CD4-positive, alpha-beta memory T cell (primary cell): ENCODE measurements at regions of chr5 and their contacts with region 1.

Region 1: GRCh38 chr5:79133657-79134451 is 22.2 kb downstream of the BHMT start:
- DNase-seq: peak; percentile 43 to 58 (median 50)
- H3K4me3 ChIP-seq: peak overlapping the region in 1 of 2 donors; percentile 26
- H3K4me3 Mint-ChIP-seq: peak overlapping the region in 7 of 8 donors; percentile 29 to 83 (median 70)
- H3K27ac ChIP-seq: no peak overlapping the region
- H3K27ac Mint-ChIP-seq: peak overlapping the region in 2 of 7 donors; percentile 45 to 69
- H3K4me1 ChIP-seq: peaks cover 13% of the 10 kb centered on the region
- H3K4me1 Mint-ChIP-seq: peaks cover 7 to 11% (median 10%) of the 10 kb centered on the region in 4 donors
- H3K27me3 ChIP-seq: no peaks in the 10 kb centered on the region
- H3K27me3 Mint-ChIP-seq: peaks cover 4 to 7% of the 10 kb centered on the region in 2 donors

Region 2: DNA sequence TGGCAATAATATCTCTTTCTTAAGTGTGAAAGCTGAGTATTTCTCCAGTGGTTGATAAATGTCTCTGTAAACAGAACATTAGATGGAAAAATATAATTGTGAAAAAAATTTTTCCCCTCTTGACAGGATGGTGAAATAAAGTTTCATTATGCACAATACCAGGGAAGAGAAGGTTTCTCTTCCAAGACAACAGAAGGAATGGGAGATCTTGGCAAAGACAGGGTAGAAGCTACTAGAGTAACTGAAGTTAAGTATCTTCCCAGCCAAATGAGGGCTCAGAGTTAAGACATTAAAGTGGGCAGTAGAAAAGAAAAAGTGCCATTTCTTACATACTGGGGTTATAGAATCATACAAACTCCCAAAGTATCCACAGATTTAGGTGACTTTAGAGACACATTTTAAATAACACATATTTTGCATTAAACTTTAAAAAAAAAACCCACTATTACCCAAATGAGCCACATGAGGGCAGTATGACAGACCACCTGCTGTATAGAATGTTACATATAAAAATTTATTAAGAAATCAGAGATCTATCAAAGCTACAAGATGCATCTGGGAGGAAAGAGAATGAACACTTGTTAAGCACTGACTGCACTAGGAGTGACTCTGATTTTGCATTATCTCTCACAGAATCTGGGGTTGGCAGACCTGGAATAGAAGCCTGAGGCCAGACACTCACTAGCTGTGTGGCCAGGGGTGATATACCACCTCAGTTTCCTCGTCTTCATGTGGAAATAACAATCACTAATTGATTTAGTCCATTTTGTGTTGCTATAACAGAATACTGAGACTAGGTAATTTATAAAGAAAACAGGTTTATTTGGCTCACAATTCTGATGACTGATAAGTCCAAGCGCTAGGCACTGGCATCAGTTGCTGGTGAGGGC is 247.3 kb before region 1 on chr5:
- CTCF ChIA-PET with region 1: interaction called, 6 read pairs
- POLR2A ChIA-PET with region 1: no interaction called
- intact Hi-C with region 1: loop called (anchors 1 kb)
- DNase-seq: peak in 3 of 5 donors; percentile 2 to 14 (median 11)
- H3K4me3 ChIP-seq: no peak overlapping the region
- H3K4me3 Mint-ChIP-seq: no peak overlapping the region
- H3K27ac ChIP-seq: no peak overlapping the region
- H3K27ac Mint-ChIP-seq: peak overlapping the region in 1 of 7 donors; percentile 13
- H3K4me1 ChIP-seq: peaks cover 8% of the 10 kb centered on the region
- H3K4me1 Mint-ChIP-seq: peaks cover 7 to 17% (median 13%) of the 10 kb centered on the region in 4 donors
- H3K27me3 ChIP-seq: no peaks in the 10 kb centered on the region
- H3K27me3 Mint-ChIP-seq: no peaks in the 10 kb centered on the region

Region 3: GRCh38 chr5:79020861-79021561 is 112.8 kb before region 1 on chr5:
- CTCF ChIA-PET with region 1: interaction called, 64 read pairs
- POLR2A ChIA-PET with region 1: no interaction called
- intact Hi-C with region 1: loop called (anchors 1 kb)
- DNase-seq: peak in 3 of 5 donors; percentile 14 to 21 (median 18)
- H3K4me3 ChIP-seq: no peak overlapping the region
- H3K4me3 Mint-ChIP-seq: peak overlapping the region in 3 of 8 donors; percentile 11 to 33 (median 20)
- H3K27ac ChIP-seq: no peak overlapping the region
- H3K27ac Mint-ChIP-seq: no peak overlapping the region
- H3K4me1 ChIP-seq: no peaks in the 10 kb centered on the region
- H3K4me1 Mint-ChIP-seq: peaks cover 0 to 11% (median 4%) of the 10 kb centered on the region in 4 donors
- H3K27me3 ChIP-seq: peaks cover 12% of the 10 kb centered on the region
- H3K27me3 Mint-ChIP-seq: peaks cover 22 to 53% of the 10 kb centered on the region in 2 donors

Region 4: GRCh38 chr5:79151942-79152671 is 18.3 kb after region 1 on chr5:
- CTCF ChIA-PET with region 1: interaction called, 71 read pairs
- POLR2A ChIA-PET with region 1: no interaction called
- intact Hi-C with region 1: no loop called
- DNase-seq: no peak
- H3K4me3 ChIP-seq: no peak overlapping the region
- H3K4me3 Mint-ChIP-seq: no peak overlapping the region
- H3K27ac ChIP-seq: no peak overlapping the region
- H3K27ac Mint-ChIP-seq: no peak overlapping the region
- H3K4me1 ChIP-seq: no peaks in the 10 kb centered on the region
- H3K4me1 Mint-ChIP-seq: no peaks in the 10 kb centered on the region
- H3K27me3 ChIP-seq: no peaks in the 10 kb centered on the region
- H3K27me3 Mint-ChIP-seq: peaks cover 2 to 6% of the 10 kb centered on the region in 2 donors

Region 5: GRCh38 chr5:79200573-79201183 is 66.8 kb after region 1 on chr5:
- CTCF ChIA-PET with region 1: interaction called, 21 read pairs
- POLR2A ChIA-PET with region 1: interaction called, 3 read pairs
- intact Hi-C with region 1: loop called (anchors 2 kb)
- DNase-seq: peak in 4 of 5 donors; percentile 4 to 12 (median 7)
- H3K4me3 ChIP-seq: no peak overlapping the region
- H3K4me3 Mint-ChIP-seq: no peak overlapping the region
- H3K27ac ChIP-seq: no peak overlapping the region
- H3K27ac Mint-ChIP-seq: no peak overlapping the region
- H3K4me1 ChIP-seq: no peaks in the 10 kb centered on the region
- H3K4me1 Mint-ChIP-seq: no peaks in the 10 kb centered on the region
- H3K27me3 ChIP-seq: no peaks in the 10 kb centered on the region
- H3K27me3 Mint-ChIP-seq: no peaks in the 10 kb centered on the region

Region 6: DNA sequence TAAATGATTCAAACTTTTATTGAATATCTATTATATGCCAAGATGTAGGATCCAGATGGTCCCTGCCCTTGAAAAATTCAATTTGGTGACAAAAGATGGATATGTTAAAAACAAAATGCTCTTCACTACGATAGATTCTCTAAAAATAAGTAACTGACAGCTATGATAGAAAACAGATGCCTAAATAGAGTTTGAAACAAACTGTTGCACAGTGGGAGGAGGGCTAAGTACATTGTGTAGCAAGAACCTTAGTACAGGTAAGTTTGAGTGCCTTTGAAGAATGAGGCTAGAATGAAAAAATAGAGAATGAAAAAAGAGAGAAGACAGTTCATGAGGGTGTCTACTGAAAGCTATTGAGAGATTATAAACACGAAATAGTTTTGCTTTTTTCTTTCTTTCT is 325.8 kb after region 1 on chr5:
- CTCF ChIA-PET with region 1: interaction called, 67 read pairs
- POLR2A ChIA-PET with region 1: no interaction called
- intact Hi-C with region 1: loop called (anchors 1 kb)
- DNase-seq: no peak
- H3K4me3 ChIP-seq: no peak overlapping the region
- H3K4me3 Mint-ChIP-seq: no peak overlapping the region
- H3K27ac ChIP-seq: no peak overlapping the region
- H3K27ac Mint-ChIP-seq: no peak overlapping the region
- H3K4me1 ChIP-seq: no peaks in the 10 kb centered on the region
- H3K4me1 Mint-ChIP-seq: peaks cover 0 to 1% (median 0%) of the 10 kb centered on the region in 4 donors
- H3K27me3 ChIP-seq: no peaks in the 10 kb centered on the region
- H3K27me3 Mint-ChIP-seq: peaks cover 0 to 5% of the 10 kb centered on the region in 2 donors

Region 7: GRCh38 chr5:79512049-79512448 is 378.2 kb after region 1 on chr5:
- CTCF ChIA-PET with region 1: no interaction called
- POLR2A ChIA-PET with region 1: no interaction called
- intact Hi-C with region 1: no loop called
- DNase-seq: no peak
- H3K4me3 ChIP-seq: no peak overlapping the region
- H3K4me3 Mint-ChIP-seq: peak overlapping the region in 2 of 8 donors; percentile 10 to 12
- H3K27ac ChIP-seq: no peak overlapping the region
- H3K27ac Mint-ChIP-seq: no peak overlapping the region
- H3K4me1 ChIP-seq: peaks cover 18% of the 10 kb centered on the region
- H3K4me1 Mint-ChIP-seq: peaks cover 13 to 25% (median 16%) of the 10 kb centered on the region in 4 donors
- H3K27me3 ChIP-seq: peaks cover 9% of the 10 kb centered on the region
- H3K27me3 Mint-ChIP-seq: peaks cover 21% of the 10 kb centered on the region in 2 donors

Region 8: GRCh38 chr5:79857714-79858409 is 724.0 kb after region 1 on chr5:
- CTCF ChIA-PET with region 1: no interaction called
- POLR2A ChIA-PET with region 1: no interaction called
- intact Hi-C with region 1: loop called (anchors 5 kb)
- DNase-seq: peak; percentile 57 to 71 (median 61)
- H3K4me3 ChIP-seq: no peak overlapping the region
- H3K4me3 Mint-ChIP-seq: no peak overlapping the region
- H3K27ac ChIP-seq: no peak overlapping the region
- H3K27ac Mint-ChIP-seq: no peak overlapping the region
- H3K4me1 ChIP-seq: no peaks in the 10 kb centered on the region
- H3K4me1 Mint-ChIP-seq: peaks cover 0 to 4% (median 0%) of the 10 kb centered on the region in 4 donors
- H3K27me3 ChIP-seq: no peaks in the 10 kb centered on the region
- H3K27me3 Mint-ChIP-seq: peaks cover 3 to 6% of the 10 kb centered on the region in 2 donors